ENCODE measurements at regions of chr19 and their contacts with region 1.

Region 1: GRCh38 chr19:17555480-17555928 is at the start of gene COLGALT1:
- DNase-seq: peak; percentile 99
- H3K4me3 Mint-ChIP-seq: peak within 1 kb of the TSS; percentile 86
- H3K27ac Mint-ChIP-seq: peak within 1 kb of the TSS; percentile 72
- H3K4me1 Mint-ChIP-seq: peaks cover 25% of the 10 kb centered on the region
- H3K27me3 Mint-ChIP-seq: no peaks in the 10 kb centered on the region
- total RNA-seq, gene COLGALT1: 36.1 to 38.9 TPM

Region 2: GRCh38 chr19:17496337-17496997 is 59.0 kb before region 1 on chr19:
- CTCF ChIA-PET with region 1: interaction called, 10 read pairs
- POLR2A ChIA-PET with region 1: no interaction called
- DNase-seq: peak; percentile 85
- H3K4me3 Mint-ChIP-seq: no peak overlapping the region
- H3K27ac Mint-ChIP-seq: no peak overlapping the region
- H3K4me1 Mint-ChIP-seq: peaks cover 28% of the 10 kb centered on the region
- H3K27me3 Mint-ChIP-seq: no peaks in the 10 kb centered on the region

Region 3: GRCh38 chr19:17616961-17617806 is 61.7 kb after region 1 on chr19:
- CTCF ChIA-PET with region 1: no interaction called
- POLR2A ChIA-PET with region 1: no interaction called
- DNase-seq: no peak
- H3K4me3 Mint-ChIP-seq: no peak overlapping the region
- H3K27ac Mint-ChIP-seq: no peak overlapping the region
- H3K4me1 Mint-ChIP-seq: peaks cover 9% of the 10 kb centered on the region
- H3K27me3 Mint-ChIP-seq: peaks cover 20% of the 10 kb centered on the region

Measured in activated CD4-positive, alpha-beta memory T cell treated with anti-CD3 and anti-CD28 coated beads, Interleukin-2, amount 10 ng/mL, durations not matched to agents 7 days and 5 days (primary cell).